PC-9 (cell line): ENCODE measurements at regions of chr19 and their contacts with region 1.

Region 1: DNA sequence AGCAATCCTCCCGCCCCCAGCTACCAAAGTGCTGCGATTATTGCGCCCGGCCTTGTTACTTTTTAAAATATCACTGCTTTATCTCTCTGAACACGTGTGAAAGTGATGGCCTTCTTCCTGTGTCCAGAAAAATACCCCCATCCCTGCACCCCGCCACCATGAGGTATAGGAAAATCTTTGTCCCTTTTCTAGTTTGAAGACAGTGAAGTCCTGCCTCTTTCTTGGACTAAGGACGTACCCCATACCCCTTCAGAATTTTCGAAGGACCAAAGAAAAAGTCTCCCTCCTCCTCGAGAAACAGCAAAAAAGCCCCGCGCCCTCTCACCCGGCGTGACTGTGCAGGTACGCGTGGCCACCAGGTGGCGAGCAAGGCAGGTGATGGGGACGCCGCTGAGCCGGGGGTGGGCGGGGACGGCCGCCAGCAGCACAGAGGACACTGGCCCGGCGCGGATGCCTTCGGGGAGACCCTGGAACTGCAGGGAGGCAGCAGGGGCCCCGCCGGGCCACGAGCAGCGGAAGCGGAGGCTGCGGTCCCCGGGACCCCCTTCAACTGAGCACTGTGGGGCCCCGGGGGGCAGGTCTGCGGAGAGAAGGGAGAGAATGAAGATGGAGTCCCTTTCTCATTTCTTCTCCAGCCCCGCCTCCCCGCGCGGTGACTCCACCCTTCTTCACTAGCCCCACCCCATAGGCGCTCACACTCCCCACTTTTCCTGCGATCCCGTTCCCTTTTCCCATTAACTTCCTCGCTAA is 3.2 kb downstream of the VSIG10L start:
- DNase-seq: peak; percentile 65 to 85
- H3K4me3 ChIP-seq: peak overlapping the region; percentile 84
- H3K27ac ChIP-seq: no peak overlapping the region
- H3K4me1 ChIP-seq: peaks cover 21% of the 10 kb centered on the region
- H3K27me3 ChIP-seq: no peaks in the 10 kb centered on the region
- CTCF ChIP-seq: peak; percentile 97

Region 2: DNA sequence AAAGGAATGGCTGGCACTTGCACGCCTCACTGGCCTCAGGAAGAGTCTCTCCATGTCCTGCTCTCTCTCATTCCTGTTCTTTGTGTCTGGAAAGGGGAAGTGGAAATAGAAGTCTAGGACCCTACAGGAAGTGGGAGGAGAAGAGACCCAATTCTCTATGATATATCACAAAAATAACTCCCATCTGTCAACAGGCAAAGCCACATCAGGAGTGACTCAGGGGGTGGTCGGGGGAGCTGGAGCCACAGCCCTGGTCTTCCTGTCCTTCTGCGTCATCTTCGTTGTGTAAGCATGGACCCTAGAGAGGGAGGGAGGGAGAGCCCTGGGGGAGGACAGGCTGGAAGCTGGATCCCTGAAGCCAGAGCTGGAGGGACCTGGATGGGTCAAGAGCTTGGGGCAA is 211.0 kb before region 1 on chr19:
- CTCF ChIA-PET with region 1: no interaction called
- POLR2A ChIA-PET with region 1: no interaction called
- intact Hi-C with region 1: no loop called
- DNase-seq: no peak
- H3K4me3 ChIP-seq: no peak overlapping the region
- H3K27ac ChIP-seq: no peak overlapping the region
- H3K4me1 ChIP-seq: 0 out of 2 replicates have a peak, but pooled peaks cover 9% of the 10 kb centered on the region
- H3K27me3 ChIP-seq: peaks cover 95% of the 10 kb centered on the region
- CTCF ChIP-seq: no peak

Region 3: GRCh38 chr19:51393959-51394836 is 55.5 kb after region 1 on chr19:
- CTCF ChIA-PET with region 1: interaction called, 12 read pairs
- POLR2A ChIA-PET with region 1: interaction called, 3 read pairs
- intact Hi-C with region 1: loop called (anchors 2 kb)
- DNase-seq: peak; percentile 94 to 99
- H3K4me3 ChIP-seq: peak overlapping the region; percentile 62
- H3K27ac ChIP-seq: no peak overlapping the region
- H3K4me1 ChIP-seq: peaks cover 10% of the 10 kb centered on the region
- H3K27me3 ChIP-seq: no peaks in the 10 kb centered on the region
- CTCF ChIP-seq: no peak

Region 4: DNA sequence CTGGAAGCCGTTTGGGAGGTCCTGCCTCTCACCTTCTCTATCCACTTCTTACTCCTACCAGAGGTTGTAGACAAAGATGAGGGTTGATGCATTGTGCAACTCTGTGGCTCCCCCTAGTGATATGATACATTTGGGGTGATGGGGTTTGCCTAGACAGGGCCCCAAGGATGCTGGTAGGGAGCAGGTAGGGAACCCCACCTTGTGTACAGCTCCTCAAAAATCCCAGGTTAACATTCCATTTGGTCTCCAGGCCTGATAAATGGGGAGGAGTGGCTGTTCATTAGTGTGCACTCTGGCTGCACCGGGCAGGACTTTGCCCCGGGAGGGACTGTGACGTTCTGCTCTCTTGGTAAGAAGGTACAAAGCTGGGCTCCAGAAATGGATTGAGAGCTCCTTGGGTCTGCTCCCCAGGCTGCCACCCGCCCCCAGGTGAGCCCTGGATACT is 100.3 kb after region 1 on chr19:
- CTCF ChIA-PET with region 1: no interaction called
- POLR2A ChIA-PET with region 1: no interaction called
- intact Hi-C with region 1: loop called (anchors 1 kb)
- DNase-seq: no peak
- H3K4me3 ChIP-seq: no peak overlapping the region
- H3K27ac ChIP-seq: no peak overlapping the region
- H3K4me1 ChIP-seq: no peaks in the 10 kb centered on the region
- H3K27me3 ChIP-seq: peaks cover 91% of the 10 kb centered on the region
- CTCF ChIP-seq: peak; percentile 36; the same call in 1 of the 2 replicates

Region 5: GRCh38 chr19:51514866-51515481 is 176.2 kb after region 1 on chr19:
- CTCF ChIA-PET with region 1: no interaction called
- POLR2A ChIA-PET with region 1: no interaction called
- intact Hi-C with region 1: loop called (anchors 1 kb)
- DNase-seq: no peak
- H3K4me3 ChIP-seq: no peak overlapping the region
- H3K27ac ChIP-seq: no peak overlapping the region
- H3K4me1 ChIP-seq: no peaks in the 10 kb centered on the region
- H3K27me3 ChIP-seq: peaks cover 28% of the 10 kb centered on the region; the same call in 1 of the 2 replicates
- CTCF ChIP-seq: peak; percentile 89

Region 6: DNA sequence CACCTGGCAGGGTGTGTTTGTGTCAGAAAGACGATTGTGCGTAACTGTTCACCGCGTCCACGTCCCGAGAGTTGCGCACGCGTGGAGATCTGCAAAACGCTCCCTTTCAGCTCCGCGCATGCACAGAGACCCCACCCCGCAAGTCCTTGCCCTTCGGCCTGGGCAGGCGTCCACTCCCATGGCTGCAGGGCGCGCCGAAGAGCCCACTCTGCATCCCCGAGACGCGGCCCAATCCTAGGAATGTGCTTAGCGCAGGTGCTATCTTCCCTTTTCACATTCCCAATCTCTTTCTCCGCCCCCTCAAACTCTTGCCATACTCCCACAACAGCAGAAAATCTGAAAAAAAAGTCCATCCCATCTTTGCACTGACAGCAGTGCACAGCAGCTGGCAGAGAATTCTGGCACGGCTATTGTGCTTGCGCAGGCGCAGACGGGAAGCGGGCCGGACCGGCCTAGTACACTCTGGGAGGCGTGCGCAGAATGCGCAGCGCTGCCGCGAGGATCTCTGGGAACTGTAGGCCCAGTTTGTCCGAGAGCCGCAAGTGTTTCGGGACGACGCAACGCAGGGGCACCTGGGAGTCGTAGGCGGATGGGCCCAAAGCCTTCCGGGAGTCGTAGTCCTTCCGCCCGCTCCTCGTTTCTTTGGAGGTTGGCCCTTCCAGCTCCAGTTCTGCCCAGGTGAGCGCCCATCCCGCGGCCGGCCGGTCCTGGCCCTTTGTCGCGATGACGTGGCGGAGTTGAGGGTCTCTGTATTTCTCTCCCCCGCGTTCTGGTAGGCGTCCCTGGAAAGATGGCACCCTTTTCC is 255.4 kb after region 1 on chr19:
- CTCF ChIA-PET with region 1: no interaction called
- POLR2A ChIA-PET with region 1: no interaction called
- intact Hi-C with region 1: loop called (anchors 2 kb)
- DNase-seq: peak; percentile 93 to 99
- H3K4me3 ChIP-seq: peak overlapping the region; percentile 70
- H3K27ac ChIP-seq: no peak overlapping the region
- H3K4me1 ChIP-seq: peaks cover 5% of the 10 kb centered on the region; the same call in 1 of the 2 replicates
- H3K27me3 ChIP-seq: 0 out of 2 replicates have a peak, but pooled peaks cover 10% of the 10 kb centered on the region
- CTCF ChIP-seq: no peak

Region 7: DNA sequence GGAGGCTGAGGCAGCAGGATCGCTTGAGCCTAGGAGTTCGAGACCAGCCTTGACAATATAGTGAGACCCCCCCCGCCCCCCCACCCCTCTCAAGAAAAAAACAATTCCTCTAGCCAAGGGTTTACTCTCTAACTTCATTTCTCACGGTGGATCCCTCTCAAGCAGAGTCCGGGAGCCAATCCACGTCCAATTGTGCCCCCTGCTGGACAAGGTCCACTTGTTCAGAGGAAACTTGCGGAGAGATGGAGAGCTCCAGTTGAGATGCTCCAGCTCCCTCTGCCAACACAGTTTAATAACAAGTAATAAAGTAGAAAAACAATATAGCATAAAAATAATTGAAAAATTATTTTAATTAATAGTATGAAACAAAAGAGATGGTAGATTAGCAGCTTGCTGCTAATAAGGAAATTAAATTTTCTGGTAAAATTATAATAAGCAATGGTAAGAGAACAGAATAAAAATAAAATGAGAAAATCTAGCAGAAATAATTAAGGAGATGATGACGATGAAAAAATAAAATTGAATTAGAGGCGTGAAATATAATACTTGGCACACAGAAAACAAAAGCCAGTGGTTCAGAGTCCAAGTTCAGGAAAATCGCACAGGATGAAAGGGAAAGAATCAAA is 322.4 kb after region 1 on chr19:
- CTCF ChIA-PET with region 1: interaction called, 4 read pairs
- POLR2A ChIA-PET with region 1: no interaction called
- intact Hi-C with region 1: loop called (anchors 1 kb)
- DNase-seq: peak; percentile 48 to 72
- H3K4me3 ChIP-seq: no peak overlapping the region
- H3K27ac ChIP-seq: no peak overlapping the region
- H3K4me1 ChIP-seq: no peaks in the 10 kb centered on the region
- H3K27me3 ChIP-seq: peaks cover 47% of the 10 kb centered on the region
- CTCF ChIP-seq: peak; percentile 81

Region 8: GRCh38 chr19:51810228-51810627 is 471.5 kb after region 1 on chr19:
- CTCF ChIA-PET with region 1: no interaction called
- POLR2A ChIA-PET with region 1: no interaction called
- intact Hi-C with region 1: no loop called
- DNase-seq: no peak
- H3K4me3 ChIP-seq: no peak overlapping the region
- H3K27ac ChIP-seq: no peak overlapping the region
- H3K4me1 ChIP-seq: no peaks in the 10 kb centered on the region
- H3K27me3 ChIP-seq: peaks cover 18% of the 10 kb centered on the region
- CTCF ChIP-seq: no peak; the same call in 1 of the 2 replicates